ENCODE measurements at regions of chr17 and their contacts with region 1.

Region 1: GRCh38 chr17:35747540-35748017 is 5.5 kb downstream of the GAS2L2 start:
- DNase-seq: no peak
- H3K4me3 ChIP-seq: no peak overlapping the region
- H3K27ac ChIP-seq: no peak overlapping the region
- H3K4me1 ChIP-seq: peaks cover 9% of the 10 kb centered on the region
- H3K27me3 ChIP-seq: peaks cover 1% of the 10 kb centered on the region
- CTCF ChIP-seq: peak; percentile 89 to 94 (median 92)
- POLR2A ChIP-seq: no peak

Region 2: GRCh38 chr17:35612924-35613521 is 134.6 kb before region 1 on chr17:
- intact Hi-C with region 1: loop called (anchors 5 kb)
- DNase-seq: no peak
- H3K4me3 ChIP-seq: no peak overlapping the region
- H3K27ac ChIP-seq: no peak overlapping the region
- H3K4me1 ChIP-seq: no peaks in the 10 kb centered on the region
- H3K27me3 ChIP-seq: no peaks in the 10 kb centered on the region
- CTCF ChIP-seq: peak in 1 of 3 experiments; percentile 54
- POLR2A ChIP-seq: no peak

Region 3: GRCh38 chr17:35621768-35622167 is 125.8 kb before region 1 on chr17:
- intact Hi-C with region 1: loop called (anchors 5 kb)
- DNase-seq: no peak
- H3K4me3 ChIP-seq: no peak overlapping the region
- H3K27ac ChIP-seq: no peak overlapping the region
- H3K4me1 ChIP-seq: no peaks in the 10 kb centered on the region
- H3K27me3 ChIP-seq: no peaks in the 10 kb centered on the region
- CTCF ChIP-seq: no peak
- POLR2A ChIP-seq: no peak

Region 4: GRCh38 chr17:35653619-35654361 is 93.8 kb before region 1 on chr17:
- intact Hi-C with region 1: no loop called
- DNase-seq: no peak
- H3K4me3 ChIP-seq: no peak overlapping the region
- H3K27ac ChIP-seq: no peak overlapping the region
- H3K4me1 ChIP-seq: no peaks in the 10 kb centered on the region
- H3K27me3 ChIP-seq: no peaks in the 10 kb centered on the region
- CTCF ChIP-seq: no peak
- POLR2A ChIP-seq: no peak

Region 5: GRCh38 chr17:35700150-35700549 is 47.4 kb before region 1 on chr17:
- intact Hi-C with region 1: loop called (anchors 5 kb)
- DNase-seq: no peak
- H3K4me3 ChIP-seq: no peak overlapping the region
- H3K27ac ChIP-seq: no peak overlapping the region
- H3K4me1 ChIP-seq: no peaks in the 10 kb centered on the region
- H3K27me3 ChIP-seq: no peaks in the 10 kb centered on the region
- CTCF ChIP-seq: no peak
- POLR2A ChIP-seq: no peak